Tibial artery (tissue), 4 donors: ENCODE measurements at regions of chr1 and their contacts with region 1.

Region 1: DNA sequence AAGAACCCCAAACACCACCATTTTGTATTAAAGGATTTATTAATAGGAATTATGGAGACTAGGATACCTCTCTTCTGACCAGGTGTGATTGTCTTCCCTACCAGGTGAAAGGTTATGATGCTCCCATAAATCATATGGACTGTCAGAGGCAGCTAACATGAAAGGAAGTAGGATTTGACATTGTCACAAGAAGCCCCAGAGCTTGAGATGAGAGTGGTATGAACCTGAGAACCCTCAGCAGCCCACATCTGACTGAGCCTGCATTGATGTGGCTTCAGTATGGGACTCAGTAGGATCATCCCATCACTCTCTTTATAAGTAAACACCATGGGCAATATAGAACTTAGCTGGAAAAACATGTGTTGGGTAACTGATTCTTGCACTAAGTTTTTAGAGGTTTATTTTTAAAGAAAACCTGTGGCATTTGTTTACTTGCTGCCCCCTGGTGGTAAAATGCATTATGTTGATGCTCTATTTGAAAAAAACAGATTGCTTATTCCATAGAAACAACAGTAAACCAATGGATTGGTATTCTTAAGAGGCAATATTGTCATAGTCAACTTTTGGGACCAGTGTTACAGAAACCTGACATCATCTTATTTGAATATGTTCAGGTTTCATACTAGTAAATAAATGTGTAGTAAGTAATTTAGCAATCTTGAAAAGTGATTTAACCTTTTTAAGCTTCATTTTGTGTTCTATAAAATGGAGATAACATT is 16.6 kb upstream of the CACYBP start:
- DNase-seq: no peak
- H3K4me3 ChIP-seq: no peak overlapping the region
- H3K27ac ChIP-seq: no peak overlapping the region
- H3K4me1 ChIP-seq: no peaks in the 10 kb centered on the region
- H3K27me3 ChIP-seq: no peaks in the 10 kb centered on the region
- CTCF ChIP-seq: peak; percentile 67 to 70

Region 2: DNA sequence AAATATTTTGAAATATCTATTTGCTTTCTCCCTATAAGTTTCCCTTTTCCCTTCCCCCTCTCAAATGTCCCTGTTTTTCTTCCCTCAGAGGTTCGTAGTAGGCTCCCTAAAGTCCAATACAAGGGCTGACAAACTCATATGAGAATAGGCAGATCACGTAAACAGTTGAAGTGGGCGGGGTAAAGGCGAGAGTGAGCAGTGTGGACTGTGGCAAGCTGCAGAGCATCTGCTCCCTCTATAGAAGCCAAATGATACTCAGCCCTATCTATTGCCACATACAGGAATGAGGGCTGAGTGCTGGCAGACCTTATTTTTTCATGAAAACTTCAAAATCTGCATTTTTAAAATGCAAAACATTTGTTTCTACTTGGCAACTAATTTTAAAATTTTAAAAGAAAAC is 1479.7 kb before region 1 on chr1:
- intact Hi-C with region 1: no loop called
- DNase-seq: no peak
- H3K4me3 ChIP-seq: no peak overlapping the region
- H3K27ac ChIP-seq: no peak overlapping the region
- H3K4me1 ChIP-seq: no peaks in the 10 kb centered on the region
- H3K27me3 ChIP-seq: no peaks in the 10 kb centered on the region
- CTCF ChIP-seq: no peak

Region 3: DNA sequence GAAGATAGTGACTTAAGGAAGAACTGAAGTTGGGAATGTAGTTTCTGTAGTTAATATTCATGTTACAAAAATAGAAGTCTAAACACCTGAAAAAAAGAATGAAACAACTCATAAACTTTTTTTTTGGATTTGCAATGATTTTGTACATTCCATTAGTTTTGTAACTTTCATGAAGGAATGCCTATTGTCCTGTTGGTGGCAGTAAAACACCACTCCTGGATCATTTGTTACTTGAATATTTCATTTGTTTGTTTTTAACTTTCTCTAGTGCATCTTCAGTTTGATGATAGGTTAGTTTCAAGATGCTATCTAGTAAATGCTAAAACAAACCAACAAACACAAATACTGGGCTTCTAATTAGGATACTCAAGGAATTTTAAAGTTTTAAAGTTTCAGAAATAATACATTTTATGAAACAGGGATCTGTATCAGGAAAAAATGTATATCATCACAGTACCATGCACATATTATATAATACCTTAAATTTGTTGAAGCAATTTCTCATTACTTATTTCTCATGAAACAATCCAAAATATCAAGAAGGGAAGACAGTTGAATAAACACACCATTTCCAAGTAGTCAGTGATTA is 213.1 kb before region 1 on chr1:
- intact Hi-C with region 1: loop called (anchors 5 kb)
- DNase-seq: no peak
- H3K4me3 ChIP-seq: no peak overlapping the region
- H3K27ac ChIP-seq: no peak overlapping the region
- H3K4me1 ChIP-seq: no peaks in the 10 kb centered on the region
- H3K27me3 ChIP-seq: no peaks in the 10 kb centered on the region
- CTCF ChIP-seq: peak; percentile 78 to 81

Region 4: DNA sequence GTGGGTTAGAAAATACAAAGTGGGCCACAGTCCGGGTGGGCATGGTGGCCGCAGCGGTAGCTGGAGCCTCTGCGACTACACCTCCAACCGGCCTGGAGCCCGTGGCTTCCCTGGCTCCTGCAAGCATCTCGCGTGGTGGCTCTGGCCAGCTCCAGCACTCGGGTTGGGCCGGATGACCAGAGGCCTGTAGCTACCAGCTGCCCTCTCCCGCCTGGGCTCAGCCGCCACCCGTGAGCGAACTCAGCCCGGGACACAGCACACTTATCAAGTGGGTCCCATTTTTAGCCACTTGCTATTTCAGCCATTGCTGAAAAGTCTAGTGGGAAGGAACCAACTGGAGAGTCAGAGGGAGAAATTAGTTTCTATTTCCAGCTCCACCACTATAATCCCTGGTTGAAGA is 91.1 kb before region 1 on chr1:
- intact Hi-C with region 1: no loop called
- DNase-seq: no peak
- H3K4me3 ChIP-seq: no peak overlapping the region
- H3K27ac ChIP-seq: no peak overlapping the region
- H3K4me1 ChIP-seq: no peaks in the 10 kb centered on the region
- H3K27me3 ChIP-seq: no peaks in the 10 kb centered on the region
- CTCF ChIP-seq: no peak